ENCODE measurements at regions of chr17 and their contacts with region 1.

Region 1: GRCh38 chr17:8409966-8410864 is 12.6 kb upstream of the RNF222 start:
- DNase-seq: peak; percentile 83

Region 2: GRCh38 chr17:8314797-8315763 is 95.1 kb before region 1 on chr17:
- CTCF ChIA-PET with region 1: no interaction called
- POLR2A ChIA-PET with region 1: no interaction called
- DNase-seq: no peak

Region 3: DNA sequence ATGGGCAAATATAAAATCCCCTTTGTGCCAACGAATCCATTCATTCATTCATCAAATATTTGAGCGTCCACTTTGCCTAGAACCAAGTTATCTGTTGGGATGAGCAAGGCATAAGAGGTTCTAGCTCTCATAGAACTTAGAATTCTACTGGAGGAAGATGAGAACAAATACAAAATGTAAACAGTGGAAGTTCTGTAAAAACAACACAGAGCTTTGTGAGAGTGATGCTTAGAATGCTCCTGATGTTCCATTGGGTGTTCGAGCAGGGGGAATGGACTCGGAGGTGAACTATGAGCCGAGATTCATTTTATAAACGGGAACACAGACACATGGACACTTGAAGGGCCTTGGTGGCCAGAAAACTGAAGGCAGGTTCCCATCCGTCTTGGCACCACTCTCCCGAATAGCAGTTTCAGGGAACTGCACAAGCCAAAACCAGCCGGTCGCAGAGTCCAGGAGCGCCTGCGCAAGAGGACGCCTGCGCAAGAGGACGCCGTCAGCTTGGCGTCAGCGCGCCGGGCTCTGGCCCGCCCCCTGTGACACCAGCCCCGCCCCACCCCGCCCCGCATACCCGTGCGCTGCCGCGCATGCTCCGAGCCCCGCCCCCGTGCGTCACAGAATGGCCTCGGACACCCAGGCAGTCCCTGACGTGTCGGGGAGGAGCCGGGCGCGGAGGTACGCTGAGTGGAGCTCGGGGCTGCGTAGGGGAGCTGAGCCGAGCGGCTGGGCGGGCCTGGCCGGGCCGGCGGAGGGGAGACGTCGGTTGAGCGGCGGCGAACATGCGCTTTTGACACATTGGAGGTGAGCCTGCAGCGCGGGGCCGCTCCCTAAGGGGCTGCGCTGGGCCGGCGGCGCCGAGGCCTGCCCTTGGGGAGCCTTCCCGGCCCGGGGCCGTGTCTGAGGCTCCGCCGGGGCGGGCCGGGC is 25.3 kb after region 1 on chr17 and contains the start of gene NDEL1:
- CTCF ChIA-PET with region 1: interaction called, 7 read pairs
- POLR2A ChIA-PET with region 1: interaction called, 10 read pairs
- DNase-seq: peak; percentile 99

Region 4: GRCh38 chr17:8447799-8448198 is 37.6 kb after region 1 on chr17:
- CTCF ChIA-PET with region 1: no interaction called
- POLR2A ChIA-PET with region 1: no interaction called
- DNase-seq: no peak

Region 5: GRCh38 chr17:8785547-8786413 is 375.6 kb after region 1 on chr17:
- CTCF ChIA-PET with region 1: interaction called, 10 read pairs
- POLR2A ChIA-PET with region 1: no interaction called
- DNase-seq: peak; percentile 78

Measured in HEK293T (cell line).